ENCODE measurements at regions of chr11 and their contacts with region 1.

Region 1: GRCh38 chr11:112655371-112655770 is 305.8 kb upstream of the NCAM1 start:
- DNase-seq: peak; percentile 74 to 87
- ATAC-seq: peak; percentile 55 to 87 (median 84)
- H3K4me3 ChIP-seq: no peak overlapping the region
- H3K27ac ChIP-seq: peak overlapping the region in 7 of 10 donors; percentile 17 to 72 (median 48)
- H3K4me1 ChIP-seq: peaks cover 8 to 67% (median 22%) of the 10 kb centered on the region in 9 donors
- H3K27me3 ChIP-seq: no peaks in the 10 kb centered on the region
- CTCF ChIP-seq: peak in 6 of 9 donors; percentile 8 to 47 (median 29)

Region 2: DNA sequence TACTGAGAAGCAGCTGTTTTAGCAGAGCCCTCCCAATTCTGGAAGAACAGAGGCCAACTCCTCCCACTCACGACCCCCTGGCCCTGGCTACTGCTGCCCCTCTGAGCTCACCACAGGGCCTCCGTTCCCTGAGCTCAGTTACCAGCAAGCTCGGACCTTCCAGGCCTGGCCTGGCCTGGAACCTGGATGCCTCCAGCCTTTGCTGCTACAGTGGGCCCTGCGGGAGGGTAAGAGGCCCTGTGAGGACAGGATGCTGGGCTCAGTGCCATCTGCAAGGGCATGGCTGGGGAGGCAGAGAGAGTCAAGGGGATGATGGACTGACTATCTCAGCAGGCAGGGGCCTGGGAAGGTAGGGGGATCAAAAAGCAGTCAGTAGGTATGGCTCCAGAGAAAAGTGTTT is 96.0 kb after region 1 on chr11:
- intact Hi-C with region 1: loop called in 3 of 10 experiments (anchors 10 kb)
- DNase-seq: peak; percentile 57 to 59
- ATAC-seq: peak; percentile 64 to 94 (median 79)
- H3K4me3 ChIP-seq: no peak overlapping the region
- H3K27ac ChIP-seq: peak overlapping the region in 4 of 10 donors; percentile 20 to 54 (median 42)
- H3K4me1 ChIP-seq: peaks cover 0 to 17% (median 6%) of the 10 kb centered on the region in 9 donors
- H3K27me3 ChIP-seq: peaks cover 0 to 2% (median 0%) of the 10 kb centered on the region in 7 donors
- CTCF ChIP-seq: no peak

Region 3: GRCh38 chr11:112784323-112785073 is 129.1 kb after region 1 on chr11:
- intact Hi-C with region 1: loop called in 4 of 10 experiments (anchors 5 to 10 kb)
- DNase-seq: peak; percentile 67 to 68
- ATAC-seq: peak; percentile 61 to 88 (median 79)
- H3K4me3 ChIP-seq: peak overlapping the region in 8 of 10 donors; percentile 4 to 37 (median 22)
- H3K27ac ChIP-seq: peak overlapping the region; percentile 31 to 87 (median 70)
- H3K4me1 ChIP-seq: peaks cover 17 to 52% (median 45%) of the 10 kb centered on the region in 9 donors
- H3K27me3 ChIP-seq: peaks cover 0 to 5% (median 0%) of the 10 kb centered on the region in 7 donors
- CTCF ChIP-seq: peak in 1 of 9 donors; percentile 7

Region 4: GRCh38 chr11:112837162-112837826 is 181.9 kb after region 1 on chr11:
- intact Hi-C with region 1: loop called in 1 of 10 experiments (anchors 10 kb)
- DNase-seq: peak; percentile 10 to 45
- ATAC-seq: peak; percentile 49 to 65 (median 63)
- H3K4me3 ChIP-seq: no peak overlapping the region
- H3K27ac ChIP-seq: peak overlapping the region in 1 of 10 donors; percentile 19
- H3K4me1 ChIP-seq: peaks cover 0 to 24% (median 10%) of the 10 kb centered on the region in 9 donors
- H3K27me3 ChIP-seq: no peaks in the 10 kb centered on the region
- CTCF ChIP-seq: peak in 7 of 9 donors; percentile 25 to 58 (median 43)

Measured in heart right ventricle (tissue), 16 donors.